Activated B cell treated with CpG ODN at 0.5 μM for 24 hours (primary cell): ENCODE measurements at regions of chr6 and their contacts with region 1.

Region 1: GRCh38 chr6:5723841-5724691 is 282.7 kb downstream of the NRN1 start:
- DNase-seq: peak; percentile 65
- ATAC-seq: peak; percentile 92
- H3K4me3 Mint-ChIP-seq: peak overlapping the region; percentile 91
- H3K27ac Mint-ChIP-seq: peak overlapping the region; percentile 99
- H3K4me1 Mint-ChIP-seq: peaks cover 78% of the 10 kb centered on the region
- H3K27me3 Mint-ChIP-seq: no peaks in the 10 kb centered on the region
- CTCF ChIP-seq: no peak

Region 2: DNA sequence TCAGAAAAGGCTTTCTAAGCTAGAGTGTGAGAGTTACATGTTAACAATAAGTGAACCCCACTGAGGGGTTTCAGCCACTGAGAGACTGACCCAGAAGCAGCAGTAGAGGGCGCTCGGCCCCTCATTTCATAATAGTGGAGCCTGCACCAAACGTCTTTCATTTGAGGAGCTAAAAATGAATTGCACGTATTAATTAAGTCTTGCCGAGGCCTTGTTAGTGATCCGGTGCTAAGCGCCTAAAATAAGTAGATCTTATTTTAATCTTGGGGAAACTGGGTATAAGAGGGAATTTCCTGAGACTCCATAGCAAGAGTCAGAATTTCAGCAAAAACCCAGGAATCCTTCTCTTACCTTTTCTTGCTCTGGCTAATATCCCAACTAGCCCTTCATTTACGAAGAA is 253.0 kb before region 1 on chr6:
- CTCF ChIA-PET with region 1: interaction called, 10 read pairs
- POLR2A ChIA-PET with region 1: no interaction called
- intact Hi-C with region 1: no loop called
- DNase-seq: peak; percentile 24
- ATAC-seq: peak; percentile 70
- H3K4me3 Mint-ChIP-seq: no peak overlapping the region
- H3K27ac Mint-ChIP-seq: no peak overlapping the region
- H3K4me1 Mint-ChIP-seq: no peaks in the 10 kb centered on the region
- H3K27me3 Mint-ChIP-seq: no peaks in the 10 kb centered on the region
- CTCF ChIP-seq: no peak

Region 3: GRCh38 chr6:5680095-5680494 is 44.0 kb before region 1 on chr6:
- CTCF ChIA-PET with region 1: no interaction called
- POLR2A ChIA-PET with region 1: interaction called, 4 read pairs
- intact Hi-C with region 1: loop called (anchors 1 kb)
- DNase-seq: no peak
- ATAC-seq: peak; percentile 37
- H3K4me3 Mint-ChIP-seq: peak overlapping the region; percentile 68
- H3K27ac Mint-ChIP-seq: peak overlapping the region; percentile 80
- H3K4me1 Mint-ChIP-seq: peaks cover 39% of the 10 kb centered on the region
- H3K27me3 Mint-ChIP-seq: no peaks in the 10 kb centered on the region
- CTCF ChIP-seq: no peak

Region 4: GRCh38 chr6:5892669-5893068 is 168.6 kb after region 1 on chr6:
- CTCF ChIA-PET with region 1: no interaction called
- POLR2A ChIA-PET with region 1: interaction called, 3 read pairs
- intact Hi-C with region 1: loop called (anchors 1 kb)
- DNase-seq: no peak
- ATAC-seq: no peak
- H3K4me3 Mint-ChIP-seq: peak overlapping the region; percentile 86
- H3K27ac Mint-ChIP-seq: peak overlapping the region; percentile 90
- H3K4me1 Mint-ChIP-seq: peaks cover 7% of the 10 kb centered on the region
- H3K27me3 Mint-ChIP-seq: peaks cover 4% of the 10 kb centered on the region
- CTCF ChIP-seq: no peak

Region 5: DNA sequence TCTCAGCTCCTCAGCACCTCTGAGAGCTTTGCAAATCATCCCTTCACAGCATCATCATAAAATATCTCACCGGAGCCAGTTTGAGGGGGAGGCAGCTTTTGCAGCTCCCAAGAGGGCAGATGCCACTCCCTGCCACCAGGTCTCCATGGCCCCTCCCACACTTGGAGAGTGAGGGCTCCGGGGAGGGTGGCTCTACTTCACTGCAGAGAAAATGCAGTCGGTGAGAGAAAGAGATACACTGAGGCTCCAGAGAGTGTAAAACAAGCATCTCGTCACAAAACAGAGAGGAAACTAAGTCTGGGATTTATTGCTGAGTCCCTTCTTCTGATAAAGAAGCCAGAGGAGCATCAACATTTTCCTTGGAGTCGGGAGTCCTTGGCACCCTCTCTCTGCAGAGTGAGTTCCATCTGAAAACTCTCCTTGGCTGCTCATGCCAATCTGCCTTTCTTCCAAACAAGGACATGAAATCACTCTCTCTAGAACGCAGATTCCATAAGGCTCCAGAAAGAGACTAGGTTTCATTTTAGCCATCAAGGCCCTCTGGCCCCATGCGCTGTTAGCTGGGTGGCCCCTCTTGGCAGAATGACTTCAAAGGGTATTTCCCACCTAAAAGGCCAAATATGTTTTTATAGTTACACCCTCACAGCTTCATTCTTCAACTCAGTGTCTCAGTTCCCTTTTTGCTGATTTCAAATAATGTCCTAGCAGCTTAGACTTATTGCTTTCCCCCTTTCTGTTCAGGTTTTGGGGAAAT is 667.0 kb after region 1 on chr6:
- CTCF ChIA-PET with region 1: no interaction called
- POLR2A ChIA-PET with region 1: no interaction called
- intact Hi-C with region 1: loop called (anchors 5 kb)
- DNase-seq: peak; percentile 42
- ATAC-seq: peak; percentile 78
- H3K4me3 Mint-ChIP-seq: peak overlapping the region; percentile 77
- H3K27ac Mint-ChIP-seq: peak overlapping the region; percentile 96
- H3K4me1 Mint-ChIP-seq: peaks cover 63% of the 10 kb centered on the region
- H3K27me3 Mint-ChIP-seq: peaks cover 2% of the 10 kb centered on the region
- CTCF ChIP-seq: no peak